ENCODE measurements at regions of chr9 and their contacts with region 1.

Region 1: GRCh38 chr9:136109351-136110081 is 9.2 kb downstream of the TMEM250 start:
- DNase-seq: peak; percentile 96
- H3K4me3 ChIP-seq: peak overlapping the region; percentile 29 to 43; a peak in 3 of 4 replicates
- H3K27ac ChIP-seq: peak overlapping the region; percentile 40 to 79; a peak in 3 of 4 replicates
- H3K4me1 ChIP-seq: peaks cover 36 to 52% of the 10 kb centered on the region in 2 experiments; a peak in 3 of 4 replicates
- H3K27me3 ChIP-seq: no peaks in the 10 kb centered on the region
- CTCF ChIP-seq: no peak
- EP300 ChIP-seq: peak; percentile 56 to 66; a peak in 2 of 4 replicates
- RAD21 ChIP-seq: peak; percentile 21

Region 2: DNA sequence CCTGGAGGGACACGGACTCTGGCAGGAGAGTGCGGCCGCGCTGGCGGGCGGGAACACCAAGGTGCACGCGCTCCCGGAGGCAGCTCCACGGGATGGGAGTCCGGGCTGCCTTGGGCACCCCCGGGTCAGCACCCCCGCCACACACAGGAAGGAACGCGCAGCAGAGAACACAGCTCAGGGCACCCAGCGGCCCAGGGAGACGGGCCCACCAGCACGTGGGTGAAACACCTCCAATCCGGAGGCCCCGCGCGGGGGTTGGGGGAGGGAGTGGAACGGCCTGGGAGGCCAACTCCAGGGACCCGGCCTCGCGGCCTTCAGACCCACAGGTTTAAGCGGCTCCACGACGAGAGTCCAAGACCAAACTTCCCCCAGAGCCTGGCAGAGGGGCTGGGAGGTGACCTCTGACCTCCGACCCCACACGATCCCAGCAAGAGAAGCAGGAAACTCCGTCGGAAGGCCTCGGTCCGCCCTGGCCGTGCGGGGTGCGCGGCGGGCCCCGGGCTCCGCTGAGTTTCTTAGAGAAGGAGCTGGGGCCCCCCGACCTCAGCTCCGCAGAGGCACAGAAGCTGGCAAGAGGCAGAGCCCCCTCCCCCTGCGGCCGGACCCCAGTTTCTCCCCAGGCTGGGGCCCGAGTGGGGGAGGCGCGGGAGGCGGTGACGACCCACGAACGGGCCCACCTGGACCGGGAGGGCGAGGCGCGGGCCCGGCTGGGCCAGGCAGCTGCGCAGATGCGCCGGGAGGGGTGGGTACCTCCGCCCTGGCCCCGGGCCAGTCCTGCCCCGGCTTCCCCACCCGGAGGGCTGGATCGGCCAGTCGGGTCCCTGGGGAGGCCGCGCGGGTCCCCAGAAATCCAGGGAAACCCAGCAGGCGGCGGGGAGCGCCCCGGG is 15.3 kb before region 1 on chr9:
- CTCF ChIA-PET with region 1: interaction called, 14 read pairs
- POLR2A ChIA-PET with region 1: interaction called, 6 read pairs
- DNase-seq: peak; percentile 78
- H3K4me3 ChIP-seq: peak overlapping the region; percentile 75 to 78
- H3K27ac ChIP-seq: peak overlapping the region in 1 of 2 experiments; percentile 6; a peak in 2 of 4 replicates
- H3K4me1 ChIP-seq: peaks cover 31 to 32% of the 10 kb centered on the region in 2 experiments; a peak in 3 of 4 replicates
- H3K27me3 ChIP-seq: no peaks in the 10 kb centered on the region
- CTCF ChIP-seq: no peak
- EP300 ChIP-seq: no peak
- RAD21 ChIP-seq: no peak

Measured in SK-N-SH (cell line).